SK-N-SH (cell line): ENCODE measurements at regions of chr2 and their contacts with region 1.

Region 1: GRCh38 chr2:120312861-120313694 is 32.9 kb upstream of the INHBB start:
- DNase-seq: peak; percentile 80
- H3K4me3 ChIP-seq: peak overlapping the region; percentile 21 to 42; a peak in 2 of 4 replicates
- H3K27ac ChIP-seq: no peak overlapping the region
- H3K4me1 ChIP-seq: peaks cover 0 to 4% of the 10 kb centered on the region in 2 experiments; a peak in 1 of 4 replicates
- H3K27me3 ChIP-seq: no peaks in the 10 kb centered on the region
- CTCF ChIP-seq: peak; percentile 90
- EP300 ChIP-seq: no peak
- RAD21 ChIP-seq: peak; percentile 85

Region 2: DNA sequence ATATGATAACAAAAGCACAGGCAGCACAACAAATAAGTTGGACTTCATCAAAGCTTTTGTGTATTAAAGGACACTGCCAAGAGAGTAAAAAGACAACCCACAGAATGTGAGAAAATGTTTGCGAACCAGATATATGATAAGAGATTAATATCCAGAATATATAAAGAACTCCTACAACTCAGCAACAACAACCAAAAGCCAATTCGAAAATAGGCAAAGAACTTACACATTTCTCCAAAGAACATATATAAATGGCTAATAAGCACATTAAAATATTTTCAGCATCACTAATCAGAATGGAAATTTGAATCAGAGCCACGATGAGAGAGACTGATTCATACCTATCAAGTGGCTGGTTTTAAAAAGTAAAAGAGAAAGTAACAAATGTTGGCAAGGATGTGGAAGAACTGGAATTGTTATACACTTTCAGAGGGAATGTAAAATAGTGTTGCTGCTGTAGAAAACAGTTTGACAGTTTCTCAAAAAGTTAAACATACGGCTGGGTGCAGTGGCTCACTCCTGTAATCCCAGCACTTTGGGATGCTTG is 275.0 kb before region 1 on chr2:
- CTCF ChIA-PET with region 1: no interaction called
- POLR2A ChIA-PET with region 1: no interaction called
- DNase-seq: no peak
- H3K4me3 ChIP-seq: no peak overlapping the region
- H3K27ac ChIP-seq: no peak overlapping the region
- H3K4me1 ChIP-seq: no peaks in the 10 kb centered on the region
- H3K27me3 ChIP-seq: no peaks in the 10 kb centered on the region
- CTCF ChIP-seq: no peak
- EP300 ChIP-seq: no peak
- RAD21 ChIP-seq: no peak

Region 3: GRCh38 chr2:120109186-120110061 is 203.7 kb before region 1 on chr2:
- CTCF ChIA-PET with region 1: interaction called, 26 read pairs
- POLR2A ChIA-PET with region 1: interaction called, 3 read pairs
- DNase-seq: peak; percentile 41
- H3K4me3 ChIP-seq: no peak overlapping the region
- H3K27ac ChIP-seq: peak overlapping the region in 1 of 2 experiments; percentile 45; a peak in 2 of 4 replicates
- H3K4me1 ChIP-seq: peaks cover 14 to 20% of the 10 kb centered on the region in 2 experiments
- H3K27me3 ChIP-seq: no peaks in the 10 kb centered on the region
- CTCF ChIP-seq: peak; percentile 63
- EP300 ChIP-seq: peak in 1 of 2 experiments; percentile 24; a peak in 1 of 4 replicates
- RAD21 ChIP-seq: peak; percentile 79

Region 4: DNA sequence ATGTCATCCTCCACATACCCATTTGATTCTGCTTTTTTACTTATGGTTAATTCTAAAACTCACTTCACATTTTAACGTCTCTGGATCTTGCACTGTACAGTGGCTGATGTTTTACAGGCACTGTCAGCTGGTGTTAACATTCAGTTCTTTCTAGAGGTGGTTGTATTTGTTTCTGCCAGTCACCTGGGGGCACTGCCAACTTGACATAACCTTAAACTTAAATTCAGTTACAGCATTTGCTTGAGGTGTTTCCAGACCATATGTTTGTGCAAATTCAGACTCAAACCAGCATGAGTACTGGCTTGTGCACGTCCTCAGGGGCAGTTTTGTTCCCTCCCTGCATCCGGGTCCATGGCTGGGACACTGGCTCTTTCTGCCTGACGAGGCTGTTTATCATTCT is 84.5 kb before region 1 on chr2:
- CTCF ChIA-PET with region 1: interaction called, 11 read pairs
- POLR2A ChIA-PET with region 1: no interaction called
- DNase-seq: no peak
- H3K4me3 ChIP-seq: no peak overlapping the region
- H3K27ac ChIP-seq: no peak overlapping the region
- H3K4me1 ChIP-seq: peaks cover 3 to 22% of the 10 kb centered on the region in 2 experiments; a peak in 2 of 4 replicates
- H3K27me3 ChIP-seq: no peaks in the 10 kb centered on the region
- CTCF ChIP-seq: no peak; the same call in 1 of the 2 replicates
- EP300 ChIP-seq: no peak
- RAD21 ChIP-seq: peak; percentile 33

Region 5: DNA sequence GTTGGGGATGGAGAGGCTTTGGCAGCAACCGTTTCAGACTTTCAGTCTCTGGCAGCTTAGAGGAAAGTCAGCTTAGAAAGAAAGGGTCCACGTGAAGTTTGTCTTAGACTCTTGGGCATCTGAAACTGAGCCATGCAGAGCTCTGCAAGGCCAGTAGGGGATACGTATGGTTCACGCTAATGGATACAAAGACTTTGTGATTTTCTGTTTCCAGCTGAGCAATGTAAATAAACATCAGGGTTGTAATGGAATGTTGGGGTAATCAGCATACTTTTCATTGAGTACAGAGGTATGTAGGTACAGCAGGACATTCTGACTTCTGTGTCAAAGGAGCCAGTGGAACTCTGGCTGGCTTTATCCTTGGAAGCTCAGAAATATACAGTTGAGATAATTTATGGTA is 29.4 kb before region 1 on chr2:
- CTCF ChIA-PET with region 1: interaction called, 14 read pairs
- POLR2A ChIA-PET with region 1: no interaction called
- DNase-seq: no peak
- H3K4me3 ChIP-seq: no peak overlapping the region
- H3K27ac ChIP-seq: no peak overlapping the region
- H3K4me1 ChIP-seq: peaks cover 3 to 4% of the 10 kb centered on the region in 2 experiments; a peak in 2 of 4 replicates
- H3K27me3 ChIP-seq: no peaks in the 10 kb centered on the region
- CTCF ChIP-seq: peak; percentile 24; the same call in 1 of the 2 replicates
- EP300 ChIP-seq: no peak
- RAD21 ChIP-seq: no peak

Region 6: DNA sequence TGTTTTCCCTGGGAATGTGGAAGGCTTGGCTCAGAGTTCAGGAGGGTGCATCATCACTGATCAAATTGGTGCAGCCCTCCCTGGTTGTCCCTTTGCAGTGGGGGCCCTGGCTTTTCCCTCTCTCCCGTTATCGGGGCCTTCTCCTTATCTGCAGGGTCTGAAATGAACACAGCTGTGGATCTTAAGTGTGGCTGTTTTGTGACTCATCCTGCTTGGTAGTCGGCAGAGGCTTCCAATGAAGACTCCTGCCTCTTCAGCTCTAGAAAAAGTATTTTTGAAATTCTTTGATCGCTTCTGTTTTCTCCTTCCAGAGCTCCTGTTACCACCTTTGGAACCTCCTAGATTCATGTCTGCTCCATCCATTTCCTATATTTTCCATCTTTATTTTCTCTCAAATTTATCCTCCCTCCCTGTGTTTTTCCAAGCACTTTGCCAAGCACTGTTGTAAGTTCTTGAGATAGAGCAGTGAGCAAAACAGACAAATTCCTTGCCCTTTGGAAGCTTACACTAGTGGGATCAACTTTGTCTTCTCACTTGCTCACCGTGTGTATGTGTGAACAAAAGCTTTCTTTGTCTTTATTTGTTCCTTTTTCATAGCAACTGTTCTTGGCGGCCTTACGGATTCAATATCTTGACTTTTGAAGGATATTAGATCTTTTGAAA is 14.8 kb before region 1 on chr2:
- CTCF ChIA-PET with region 1: interaction called, 23 read pairs
- POLR2A ChIA-PET with region 1: no interaction called
- DNase-seq: no peak
- H3K4me3 ChIP-seq: no peak overlapping the region
- H3K27ac ChIP-seq: no peak overlapping the region
- H3K4me1 ChIP-seq: no peaks in the 10 kb centered on the region
- H3K27me3 ChIP-seq: no peaks in the 10 kb centered on the region
- CTCF ChIP-seq: no peak
- EP300 ChIP-seq: no peak
- RAD21 ChIP-seq: no peak

Region 7: GRCh38 chr2:120680136-120680761 is 367.2 kb after region 1 on chr2:
- CTCF ChIA-PET with region 1: interaction called, 37 read pairs
- POLR2A ChIA-PET with region 1: no interaction called
- DNase-seq: peak; percentile 83
- H3K4me3 ChIP-seq: peak overlapping the region in 1 of 2 experiments; percentile 24; a peak in 1 of 4 replicates
- H3K27ac ChIP-seq: no peak overlapping the region
- H3K4me1 ChIP-seq: peaks cover 0 to 10% of the 10 kb centered on the region in 2 experiments; a peak in 2 of 4 replicates
- H3K27me3 ChIP-seq: peaks cover 14% of the 10 kb centered on the region; the same call in 1 of the 2 replicates
- CTCF ChIP-seq: peak; percentile 58
- EP300 ChIP-seq: no peak
- RAD21 ChIP-seq: peak; percentile 86